Caco-2 (cell line): ENCODE measurements at regions of chr1 and their contacts with region 1.

Region 1: GRCh38 chr1:96688767-96689166 is 32.8 kb upstream of the PTBP2 start:
- DNase-seq: peak in 1 of 2 experiments; percentile 3
- H3K4me3 ChIP-seq: no peak overlapping the region
- H3K4me3 Mint-ChIP-seq: no peak overlapping the region
- H3K27ac Mint-ChIP-seq: no peak overlapping the region
- H3K4me1 ChIP-seq: no peaks in the 10 kb centered on the region
- H3K4me1 Mint-ChIP-seq: no peaks in the 10 kb centered on the region
- H3K27me3 ChIP-seq: no peaks in the 10 kb centered on the region
- H3K27me3 Mint-ChIP-seq: no peaks in the 10 kb centered on the region
- CTCF ChIP-seq: peak in 1 of 2 experiments; percentile 15

Region 2: GRCh38 chr1:96538111-96538641 is 150.6 kb before region 1 on chr1:
- CTCF ChIA-PET with region 1: interaction called, 4 read pairs
- POLR2A ChIA-PET with region 1: interaction called, 5 read pairs
- intact Hi-C with region 1: loop called (anchors 1 kb)
- DNase-seq: peak; percentile 4 to 21
- H3K4me3 ChIP-seq: no peak overlapping the region
- H3K4me3 Mint-ChIP-seq: no peak overlapping the region
- H3K27ac Mint-ChIP-seq: no peak overlapping the region
- H3K4me1 ChIP-seq: no peaks in the 10 kb centered on the region
- H3K4me1 Mint-ChIP-seq: no peaks in the 10 kb centered on the region
- H3K27me3 ChIP-seq: no peaks in the 10 kb centered on the region
- H3K27me3 Mint-ChIP-seq: no peaks in the 10 kb centered on the region
- CTCF ChIP-seq: peak in 1 of 2 experiments; percentile 26

Region 3: DNA sequence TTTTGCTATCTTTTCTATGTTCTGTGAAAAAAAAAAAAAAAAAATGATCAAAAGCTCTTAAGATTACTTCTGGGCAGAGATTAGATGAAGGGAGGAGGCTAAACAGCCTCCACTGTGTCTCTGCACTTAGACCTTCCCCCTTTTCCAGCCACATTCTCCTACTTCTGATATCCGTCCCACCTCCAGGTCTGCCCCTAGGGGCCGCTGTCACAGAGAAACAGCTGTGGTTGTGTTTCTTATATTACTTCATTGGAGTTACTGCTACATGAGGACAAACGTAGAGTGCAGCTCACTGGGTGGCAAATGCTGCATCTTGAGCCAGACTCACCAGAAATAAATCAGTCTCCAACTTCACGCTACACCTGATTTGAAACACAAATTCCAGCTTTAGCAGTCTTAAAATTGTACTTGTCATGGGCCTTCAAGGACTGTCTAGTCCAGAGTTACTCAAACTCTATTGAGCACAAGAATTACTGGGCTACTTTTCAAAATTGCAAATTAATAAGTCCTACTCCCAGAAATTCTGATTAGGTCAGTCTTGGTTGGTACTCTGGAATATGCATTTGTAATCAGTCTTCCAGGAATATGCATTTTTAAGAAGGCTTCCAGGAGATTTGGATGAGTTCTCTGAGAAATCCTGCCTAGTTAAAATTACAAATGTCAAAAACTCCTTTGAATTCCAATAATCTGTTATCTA is 92.4 kb before region 1 on chr1:
- CTCF ChIA-PET with region 1: no interaction called
- POLR2A ChIA-PET with region 1: no interaction called
- intact Hi-C with region 1: loop called (anchors 10 kb)
- DNase-seq: peak; percentile 40 to 47
- H3K4me3 ChIP-seq: no peak overlapping the region
- H3K4me3 Mint-ChIP-seq: no peak overlapping the region
- H3K27ac Mint-ChIP-seq: no peak overlapping the region
- H3K4me1 ChIP-seq: no peaks in the 10 kb centered on the region
- H3K4me1 Mint-ChIP-seq: no peaks in the 10 kb centered on the region
- H3K27me3 ChIP-seq: no peaks in the 10 kb centered on the region
- H3K27me3 Mint-ChIP-seq: no peaks in the 10 kb centered on the region
- CTCF ChIP-seq: peak; percentile 22 to 42

Region 4: DNA sequence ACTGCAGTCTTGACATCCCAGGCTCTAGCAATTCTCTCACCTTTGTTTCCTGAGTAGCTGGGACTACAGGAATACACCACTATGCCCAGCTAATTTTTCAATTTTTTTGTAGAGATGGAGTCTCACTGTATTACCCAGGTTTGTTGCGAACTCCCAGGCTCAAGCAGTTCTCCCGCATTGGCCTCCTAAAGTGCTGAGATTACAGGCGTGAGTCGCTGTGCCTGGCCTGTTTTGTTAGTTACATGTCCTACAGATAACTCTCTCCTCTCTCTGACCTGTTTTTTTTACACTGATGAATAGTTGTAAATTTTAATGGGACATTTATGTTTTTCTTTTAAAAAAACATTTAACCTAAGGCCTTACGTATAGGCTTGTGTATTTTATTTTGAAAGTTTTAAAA is 52.6 kb after region 1 on chr1:
- CTCF ChIA-PET with region 1: no interaction called
- POLR2A ChIA-PET with region 1: no interaction called
- intact Hi-C with region 1: no loop called
- DNase-seq: no peak
- H3K4me3 ChIP-seq: no peak overlapping the region
- H3K4me3 Mint-ChIP-seq: no peak overlapping the region
- H3K27ac Mint-ChIP-seq: no peak overlapping the region
- H3K4me1 ChIP-seq: no peaks in the 10 kb centered on the region
- H3K4me1 Mint-ChIP-seq: no peaks in the 10 kb centered on the region
- H3K27me3 ChIP-seq: no peaks in the 10 kb centered on the region
- H3K27me3 Mint-ChIP-seq: no peaks in the 10 kb centered on the region
- CTCF ChIP-seq: no peak